ENCODE measurements at regions of chrX and their contacts with region 1.

Region 1: GRCh38 chrX:9352694-9353411 is 112.0 kb upstream of the TBL1X start:
- DNase-seq: peak; percentile 72
- H3K4me3 Mint-ChIP-seq: peak overlapping the region; percentile 20
- H3K27ac Mint-ChIP-seq: peak overlapping the region; percentile 80
- H3K4me1 Mint-ChIP-seq: peaks cover 35% of the 10 kb centered on the region
- H3K27me3 Mint-ChIP-seq: no peaks in the 10 kb centered on the region

Region 2: GRCh38 chrX:9141496-9141895 is 211.4 kb before region 1 on chrX:
- CTCF ChIA-PET with region 1: no interaction called
- POLR2A ChIA-PET with region 1: no interaction called
- intact Hi-C with region 1: no loop called
- DNase-seq: no peak
- H3K4me3 Mint-ChIP-seq: no peak overlapping the region
- H3K27ac Mint-ChIP-seq: no peak overlapping the region
- H3K4me1 Mint-ChIP-seq: no peaks in the 10 kb centered on the region
- H3K27me3 Mint-ChIP-seq: no peaks in the 10 kb centered on the region

Region 3: DNA sequence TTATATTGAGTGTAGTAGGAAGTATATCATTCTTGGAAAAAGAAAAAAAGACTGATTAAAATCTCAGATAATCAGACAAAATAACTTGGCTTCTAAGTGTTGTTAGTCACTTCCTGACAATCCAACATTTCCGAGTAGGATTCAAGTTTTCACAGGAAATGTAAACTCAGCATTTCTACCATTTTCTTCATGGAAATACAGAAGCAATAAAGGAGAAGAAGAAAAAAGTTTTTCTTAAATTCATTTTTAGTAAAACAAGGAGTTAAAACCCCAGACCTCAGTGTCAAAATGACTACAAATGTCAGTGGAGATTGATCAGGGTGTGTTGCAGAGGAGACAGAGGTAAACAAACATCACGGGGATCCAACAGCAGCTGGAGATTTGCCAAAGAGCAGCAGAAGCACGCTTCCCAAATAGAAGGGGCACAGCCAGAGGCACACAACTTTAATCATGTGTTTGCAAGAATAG is 189.6 kb before region 1 on chrX:
- CTCF ChIA-PET with region 1: no interaction called
- POLR2A ChIA-PET with region 1: no interaction called
- intact Hi-C with region 1: loop called (anchors 5 kb)
- DNase-seq: no peak
- H3K4me3 Mint-ChIP-seq: no peak overlapping the region
- H3K27ac Mint-ChIP-seq: peak overlapping the region; percentile 33
- H3K4me1 Mint-ChIP-seq: peaks cover 44% of the 10 kb centered on the region
- H3K27me3 Mint-ChIP-seq: no peaks in the 10 kb centered on the region

Region 4: GRCh38 chrX:9271789-9272525 is 80.9 kb before region 1 on chrX:
- CTCF ChIA-PET with region 1: no interaction called
- POLR2A ChIA-PET with region 1: no interaction called
- intact Hi-C with region 1: no loop called
- DNase-seq: no peak
- H3K4me3 Mint-ChIP-seq: no peak overlapping the region
- H3K27ac Mint-ChIP-seq: no peak overlapping the region
- H3K4me1 Mint-ChIP-seq: no peaks in the 10 kb centered on the region
- H3K27me3 Mint-ChIP-seq: no peaks in the 10 kb centered on the region

Region 5: GRCh38 chrX:9312922-9313867 is 39.7 kb before region 1 on chrX:
- CTCF ChIA-PET with region 1: no interaction called
- POLR2A ChIA-PET with region 1: no interaction called
- intact Hi-C with region 1: loop called (anchors 2 kb)
- DNase-seq: peak; percentile 83
- H3K4me3 Mint-ChIP-seq: no peak overlapping the region
- H3K27ac Mint-ChIP-seq: no peak overlapping the region
- H3K4me1 Mint-ChIP-seq: peaks cover 13% of the 10 kb centered on the region
- H3K27me3 Mint-ChIP-seq: no peaks in the 10 kb centered on the region

Region 6: DNA sequence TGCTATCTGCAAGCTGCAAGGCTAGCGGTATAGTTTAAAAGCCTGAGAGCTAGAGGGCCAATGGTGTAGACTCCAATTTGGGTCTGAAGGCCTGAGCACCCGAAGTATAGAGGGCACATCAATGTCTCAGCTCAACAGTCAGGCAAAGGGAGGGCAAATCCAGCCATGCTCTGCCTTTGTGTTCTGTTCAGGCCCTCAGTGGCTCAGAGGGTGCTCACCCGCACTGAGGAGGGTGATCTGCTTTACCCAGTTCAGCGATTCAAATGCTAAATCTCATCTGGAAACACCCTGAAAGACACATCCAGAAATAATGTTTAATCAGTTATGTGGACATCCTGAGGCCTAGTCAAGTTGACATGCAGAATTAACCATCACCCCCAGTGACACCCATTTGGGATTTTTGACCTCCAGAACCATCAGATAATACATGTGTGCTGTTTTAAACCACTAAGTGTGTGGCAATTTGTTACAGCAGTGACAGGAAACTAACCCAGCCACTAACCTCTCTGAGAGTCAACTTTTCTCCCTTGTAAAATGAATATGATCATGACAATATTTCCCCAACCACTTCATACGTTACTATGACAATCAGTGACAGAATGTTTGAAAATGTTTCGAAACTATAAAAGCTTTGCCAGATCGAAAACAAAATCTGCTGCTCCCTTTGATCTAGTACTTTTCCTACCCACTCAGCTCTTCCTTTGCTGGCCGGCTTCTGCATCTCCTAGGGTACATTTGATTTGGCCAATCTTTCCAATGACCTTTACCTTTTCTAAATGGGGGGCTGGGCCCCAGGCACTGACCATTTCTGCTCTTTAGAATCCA is 103.6 kb after region 1 on chrX:
- CTCF ChIA-PET with region 1: interaction called, 4 read pairs
- POLR2A ChIA-PET with region 1: interaction called, 4 read pairs
- intact Hi-C with region 1: loop called (anchors 1 kb)
- DNase-seq: peak; percentile 44
- H3K4me3 Mint-ChIP-seq: peak overlapping the region; percentile 41
- H3K27ac Mint-ChIP-seq: peak overlapping the region; percentile 80
- H3K4me1 Mint-ChIP-seq: peaks cover 31% of the 10 kb centered on the region
- H3K27me3 Mint-ChIP-seq: no peaks in the 10 kb centered on the region

Region 7: GRCh38 chrX:9829308-9830267 is 476.7 kb after region 1 on chrX:
- CTCF ChIA-PET with region 1: no interaction called
- POLR2A ChIA-PET with region 1: no interaction called
- intact Hi-C with region 1: loop called (anchors 5 kb)
- DNase-seq: peak; percentile 68
- H3K4me3 Mint-ChIP-seq: no peak overlapping the region
- H3K27ac Mint-ChIP-seq: no peak overlapping the region
- H3K4me1 Mint-ChIP-seq: peaks cover 9% of the 10 kb centered on the region
- H3K27me3 Mint-ChIP-seq: peaks cover 38% of the 10 kb centered on the region